HEK293 (cell line): ENCODE measurements at regions of chrX and their contacts with region 1.

Region 1: DNA sequence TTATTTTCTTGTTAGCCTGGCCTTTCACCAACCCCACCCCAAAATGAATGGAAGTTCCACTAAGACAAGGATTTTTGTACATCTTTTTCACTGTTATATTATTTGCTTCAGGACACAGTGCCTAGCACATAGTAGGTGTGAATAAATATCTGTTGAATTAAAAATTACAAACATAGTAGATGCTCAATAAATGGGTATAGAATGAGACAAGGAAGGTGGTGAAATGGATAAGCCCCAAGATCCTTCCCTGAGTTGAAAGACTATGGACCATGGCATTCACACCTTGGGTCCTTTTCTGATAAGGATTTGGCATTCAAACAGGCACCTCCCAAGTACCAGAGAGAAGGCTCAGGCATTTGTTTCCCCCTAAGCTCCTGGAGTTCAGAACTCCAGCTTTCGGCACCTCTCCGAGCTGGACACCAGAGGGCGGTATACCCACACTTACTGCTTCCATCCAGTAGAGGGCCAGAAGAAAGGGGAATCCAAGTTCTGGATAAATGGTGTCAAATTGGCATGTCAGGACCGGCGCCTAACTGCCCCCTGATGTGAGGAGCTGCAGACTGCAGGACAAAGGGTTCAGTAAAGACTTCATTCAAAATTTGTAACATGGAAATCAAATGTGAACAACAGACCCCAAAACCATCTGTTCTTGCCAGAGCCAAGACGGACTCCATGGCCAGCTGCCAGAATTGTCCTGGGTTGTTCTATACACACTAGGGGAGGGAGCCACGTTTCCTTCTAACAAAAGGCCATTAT is 193.0 kb downstream of the GPC3 start:
- H3K4me3 ChIP-seq: no peak overlapping the region
- H3K27ac ChIP-seq: no peak overlapping the region
- H3K4me1 ChIP-seq: no peaks in the 10 kb centered on the region; the same call in 1 of the 2 replicates
- CTCF ChIP-seq: peak; percentile 99

Region 2: GRCh38 chrX:133698298-133698697 is 94.1 kb before region 1 on chrX:
- CTCF ChIA-PET with region 1: interaction called, 12 read pairs
- POLR2A ChIA-PET with region 1: no interaction called
- H3K4me3 ChIP-seq: no peak overlapping the region
- H3K27ac ChIP-seq: no peak overlapping the region
- H3K4me1 ChIP-seq: 0 out of 2 replicates have a peak, but pooled peaks cover 3% of the 10 kb centered on the region
- CTCF ChIP-seq: no peak

Region 3: GRCh38 chrX:133813971-133814370 is 21.6 kb after region 1 on chrX:
- CTCF ChIA-PET with region 1: interaction called, 19 read pairs
- POLR2A ChIA-PET with region 1: no interaction called
- H3K4me3 ChIP-seq: no peak overlapping the region
- H3K27ac ChIP-seq: no peak overlapping the region
- H3K4me1 ChIP-seq: no peaks in the 10 kb centered on the region; the same call in 1 of the 2 replicates
- CTCF ChIP-seq: no peak

Region 4: GRCh38 chrX:133921764-133922389 is 129.5 kb after region 1 on chrX:
- CTCF ChIA-PET with region 1: interaction called, 74 read pairs
- POLR2A ChIA-PET with region 1: no interaction called
- H3K4me3 ChIP-seq: no peak overlapping the region
- H3K27ac ChIP-seq: no peak overlapping the region; the same call in 1 of the 2 replicates
- H3K4me1 ChIP-seq: no peaks in the 10 kb centered on the region; the same call in none of the 2 replicates
- CTCF ChIP-seq: peak; percentile 87

Region 5: GRCh38 chrX:134026565-134027311 is 234.4 kb after region 1 on chrX:
- CTCF ChIA-PET with region 1: interaction called, 78 read pairs
- POLR2A ChIA-PET with region 1: no interaction called
- H3K4me3 ChIP-seq: no peak overlapping the region
- H3K27ac ChIP-seq: no peak overlapping the region
- H3K4me1 ChIP-seq: no peaks in the 10 kb centered on the region
- CTCF ChIP-seq: peak; percentile 63